ENCODE measurements at regions of chr2 and their contacts with region 1.

Region 1: DNA sequence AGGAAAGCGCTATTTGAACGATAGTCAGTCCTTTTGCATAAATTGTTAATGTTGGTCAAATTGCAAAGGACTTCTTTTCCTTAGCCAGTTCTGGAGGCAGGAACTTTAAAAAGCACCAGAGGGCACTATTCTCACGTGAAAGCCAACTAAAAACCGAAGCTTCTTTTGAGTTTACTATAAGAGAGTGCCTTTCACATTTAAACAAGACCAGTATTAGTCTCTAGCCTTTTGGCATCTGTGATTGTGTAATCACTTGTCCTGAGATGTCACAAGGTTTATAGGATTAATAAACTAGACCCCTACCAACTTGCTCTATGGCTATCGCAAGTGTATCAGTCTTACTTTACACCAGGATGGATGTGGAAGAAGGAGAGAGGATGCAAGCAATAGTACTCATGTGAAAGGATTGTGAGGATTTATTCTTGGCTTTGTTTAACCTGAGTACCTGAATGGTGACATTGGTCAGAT is 14.4 kb upstream of the STAT4 start:
- DNase-seq: peak in 3 of 9 experiments; percentile 32 to 72 (median 65)
- ATAC-seq: peak; percentile 69
- H3K4me3 ChIP-seq: no peak overlapping the region
- H3K4me3 Mint-ChIP-seq: no peak overlapping the region
- H3K27ac ChIP-seq: no peak overlapping the region
- H3K27ac Mint-ChIP-seq: no peak overlapping the region
- H3K4me1 ChIP-seq: no peaks in the 10 kb centered on the region
- H3K4me1 Mint-ChIP-seq: peaks cover 7% of the 10 kb centered on the region
- H3K27me3 ChIP-seq: no peaks in the 10 kb centered on the region
- H3K27me3 Mint-ChIP-seq: no peaks in the 10 kb centered on the region
- CTCF ChIP-seq: peak; percentile 86

Region 2: GRCh38 chr2:190468814-190469569 is 696.2 kb before region 1 on chr2:
- CTCF ChIA-PET with region 1: no interaction called
- POLR2A ChIA-PET with region 1: no interaction called
- intact Hi-C with region 1: no loop called
- DNase-seq: no peak
- ATAC-seq: no peak
- H3K4me3 ChIP-seq: no peak overlapping the region
- H3K4me3 Mint-ChIP-seq: no peak overlapping the region
- H3K27ac ChIP-seq: no peak overlapping the region
- H3K27ac Mint-ChIP-seq: peak overlapping the region; percentile 46
- H3K4me1 ChIP-seq: peaks cover 37% of the 10 kb centered on the region
- H3K4me1 Mint-ChIP-seq: peaks cover 62% of the 10 kb centered on the region
- H3K27me3 ChIP-seq: no peaks in the 10 kb centered on the region
- H3K27me3 Mint-ChIP-seq: no peaks in the 10 kb centered on the region
- CTCF ChIP-seq: no peak

Region 3: GRCh38 chr2:191051825-191052778 is 113.1 kb before region 1 on chr2:
- CTCF ChIA-PET with region 1: interaction called, 483 read pairs
- POLR2A ChIA-PET with region 1: no interaction called
- intact Hi-C with region 1: no loop called
- DNase-seq: peak in 3 of 9 experiments; percentile 60 to 77 (median 67)
- ATAC-seq: peak; percentile 72
- H3K4me3 ChIP-seq: no peak overlapping the region
- H3K4me3 Mint-ChIP-seq: no peak overlapping the region
- H3K27ac ChIP-seq: peak overlapping the region in 1 of 2 experiments; percentile 43
- H3K27ac Mint-ChIP-seq: no peak overlapping the region
- H3K4me1 ChIP-seq: peaks cover 18% of the 10 kb centered on the region
- H3K4me1 Mint-ChIP-seq: peaks cover 26% of the 10 kb centered on the region
- H3K27me3 ChIP-seq: no peaks in the 10 kb centered on the region
- H3K27me3 Mint-ChIP-seq: no peaks in the 10 kb centered on the region
- CTCF ChIP-seq: peak; percentile 99

Region 4: GRCh38 chr2:191180713-191181112 is 15.5 kb after region 1 on chr2:
- CTCF ChIA-PET with region 1: interaction called, 25 read pairs
- POLR2A ChIA-PET with region 1: no interaction called
- intact Hi-C with region 1: no loop called
- DNase-seq: no peak
- ATAC-seq: no peak
- H3K4me3 ChIP-seq: no peak overlapping the region
- H3K4me3 Mint-ChIP-seq: no peak overlapping the region
- H3K27ac ChIP-seq: no peak overlapping the region
- H3K27ac Mint-ChIP-seq: no peak overlapping the region
- H3K4me1 ChIP-seq: no peaks in the 10 kb centered on the region
- H3K4me1 Mint-ChIP-seq: peaks cover 6% of the 10 kb centered on the region
- H3K27me3 ChIP-seq: no peaks in the 10 kb centered on the region
- H3K27me3 Mint-ChIP-seq: no peaks in the 10 kb centered on the region
- CTCF ChIP-seq: no peak

Region 5: GRCh38 chr2:191245046-191245868 is 80.0 kb after region 1 on chr2 and contains the start of gene MYO1B:
- CTCF ChIA-PET with region 1: interaction called, 3 read pairs
- POLR2A ChIA-PET with region 1: no interaction called
- intact Hi-C with region 1: loop called in 1 of 2 experiments (anchors 5 kb)
- DNase-seq: peak in 7 of 9 experiments; percentile 10 to 74 (median 51)
- ATAC-seq: peak; percentile 72
- H3K4me3 ChIP-seq: peak within 1 kb of the TSS; percentile 39 to 64
- H3K4me3 Mint-ChIP-seq: peak within 1 kb of the TSS; percentile 85
- H3K27ac ChIP-seq: no peak within 1 kb of the TSS
- H3K27ac Mint-ChIP-seq: no peak within 1 kb of the TSS
- H3K4me1 ChIP-seq: peaks cover 8% of the 10 kb centered on the region
- H3K4me1 Mint-ChIP-seq: peaks cover 6% of the 10 kb centered on the region
- H3K27me3 ChIP-seq: peaks cover 0 to 6% of the 10 kb centered on the region in 2 experiments
- H3K27me3 Mint-ChIP-seq: peaks cover 10% of the 10 kb centered on the region
- CTCF ChIP-seq: no peak
- total RNA-seq, gene MYO1B: 0.38 to 1.00 TPM

Region 6: GRCh38 chr2:191369036-191369435 is 203.8 kb after region 1 on chr2:
- CTCF ChIA-PET with region 1: no interaction called
- POLR2A ChIA-PET with region 1: no interaction called
- intact Hi-C with region 1: loop called (anchors 1 to 5 kb)
- DNase-seq: peak in 2 of 9 experiments; percentile 7 to 8
- ATAC-seq: no peak
- H3K4me3 ChIP-seq: no peak overlapping the region
- H3K4me3 Mint-ChIP-seq: no peak overlapping the region
- H3K27ac ChIP-seq: no peak overlapping the region
- H3K27ac Mint-ChIP-seq: no peak overlapping the region
- H3K4me1 ChIP-seq: no peaks in the 10 kb centered on the region
- H3K4me1 Mint-ChIP-seq: no peaks in the 10 kb centered on the region
- H3K27me3 ChIP-seq: no peaks in the 10 kb centered on the region
- H3K27me3 Mint-ChIP-seq: peaks cover 3% of the 10 kb centered on the region
- CTCF ChIP-seq: no peak

Region 7: GRCh38 chr2:191521608-191522208 is 356.5 kb after region 1 on chr2:
- CTCF ChIA-PET with region 1: interaction called, 45 read pairs
- POLR2A ChIA-PET with region 1: no interaction called
- intact Hi-C with region 1: loop called (anchors 1 kb)
- DNase-seq: peak in 2 of 9 experiments; percentile 32 to 48
- ATAC-seq: no peak
- H3K4me3 ChIP-seq: no peak overlapping the region
- H3K4me3 Mint-ChIP-seq: no peak overlapping the region
- H3K27ac ChIP-seq: no peak overlapping the region
- H3K27ac Mint-ChIP-seq: no peak overlapping the region
- H3K4me1 ChIP-seq: no peaks in the 10 kb centered on the region
- H3K4me1 Mint-ChIP-seq: no peaks in the 10 kb centered on the region
- H3K27me3 ChIP-seq: no peaks in the 10 kb centered on the region
- H3K27me3 Mint-ChIP-seq: peaks cover 3% of the 10 kb centered on the region
- CTCF ChIP-seq: peak; percentile 69

Region 8: GRCh38 chr2:191691016-191691735 is 526.0 kb after region 1 on chr2:
- CTCF ChIA-PET with region 1: interaction called, 8 read pairs
- POLR2A ChIA-PET with region 1: no interaction called
- intact Hi-C with region 1: loop called in 1 of 2 experiments (anchors 2 kb)
- DNase-seq: peak in 7 of 9 experiments; percentile 9 to 85 (median 48)
- ATAC-seq: peak; percentile 93
- H3K4me3 ChIP-seq: no peak overlapping the region
- H3K4me3 Mint-ChIP-seq: no peak overlapping the region
- H3K27ac ChIP-seq: no peak overlapping the region
- H3K27ac Mint-ChIP-seq: peak overlapping the region; percentile 65
- H3K4me1 ChIP-seq: peaks cover 7% of the 10 kb centered on the region
- H3K4me1 Mint-ChIP-seq: peaks cover 10% of the 10 kb centered on the region
- H3K27me3 ChIP-seq: no peaks in the 10 kb centered on the region
- H3K27me3 Mint-ChIP-seq: no peaks in the 10 kb centered on the region
- CTCF ChIP-seq: peak; percentile 81